Activated CD4-positive, alpha-beta memory T cell treated with anti-CD3 and anti-CD28 coated beads for 36 hours (primary cell): ENCODE measurements at regions of chr15 and their contacts with region 1.

Region 1: DNA sequence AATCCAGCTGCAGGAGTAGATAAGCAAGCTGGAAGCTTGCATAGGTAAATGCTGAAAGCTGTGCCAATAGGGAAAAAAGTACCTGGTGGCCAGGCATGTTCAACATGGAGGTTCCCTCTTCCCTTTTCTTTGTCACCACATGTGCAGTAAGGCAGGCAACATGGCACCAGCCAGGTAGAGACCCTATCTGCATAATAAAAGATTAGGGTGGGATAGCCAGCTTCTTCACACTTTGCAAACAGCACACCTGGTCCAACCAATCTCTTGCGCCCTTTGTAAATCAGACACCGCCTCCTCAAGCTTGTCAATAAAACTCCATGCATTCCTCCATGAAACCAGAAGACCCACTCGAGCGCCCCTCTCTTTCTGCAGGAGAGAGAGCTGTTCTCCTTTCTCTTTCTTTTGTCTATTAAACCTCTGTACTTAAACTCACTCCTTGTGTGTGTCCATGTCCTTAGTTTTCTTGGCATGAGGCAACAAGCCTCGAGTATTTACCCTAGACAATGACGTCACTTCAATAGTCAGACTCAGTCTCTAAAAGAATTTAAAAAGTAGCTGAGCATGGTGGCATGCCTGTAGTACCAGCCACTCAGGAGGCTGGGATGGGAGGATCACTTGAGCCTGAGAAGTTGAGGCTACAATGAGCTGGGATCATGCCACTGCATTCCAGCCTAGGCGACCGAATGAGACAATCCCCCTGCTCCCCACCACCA is 256.3 kb downstream of the SCAPER start:
- DNase-seq: no peak
- H3K4me3 Mint-ChIP-seq: no peak overlapping the region
- H3K27ac Mint-ChIP-seq: no peak overlapping the region
- H3K4me1 Mint-ChIP-seq: peaks cover 6% of the 10 kb centered on the region
- H3K27me3 Mint-ChIP-seq: no peaks in the 10 kb centered on the region

Region 2: GRCh38 chr15:76625267-76625666 is 23.6 kb before region 1 on chr15:
- CTCF ChIA-PET with region 1: no interaction called
- POLR2A ChIA-PET with region 1: no interaction called
- intact Hi-C with region 1: no loop called
- DNase-seq: no peak
- H3K4me3 Mint-ChIP-seq: no peak overlapping the region
- H3K27ac Mint-ChIP-seq: no peak overlapping the region
- H3K4me1 Mint-ChIP-seq: no peaks in the 10 kb centered on the region
- H3K27me3 Mint-ChIP-seq: no peaks in the 10 kb centered on the region

Region 3: DNA sequence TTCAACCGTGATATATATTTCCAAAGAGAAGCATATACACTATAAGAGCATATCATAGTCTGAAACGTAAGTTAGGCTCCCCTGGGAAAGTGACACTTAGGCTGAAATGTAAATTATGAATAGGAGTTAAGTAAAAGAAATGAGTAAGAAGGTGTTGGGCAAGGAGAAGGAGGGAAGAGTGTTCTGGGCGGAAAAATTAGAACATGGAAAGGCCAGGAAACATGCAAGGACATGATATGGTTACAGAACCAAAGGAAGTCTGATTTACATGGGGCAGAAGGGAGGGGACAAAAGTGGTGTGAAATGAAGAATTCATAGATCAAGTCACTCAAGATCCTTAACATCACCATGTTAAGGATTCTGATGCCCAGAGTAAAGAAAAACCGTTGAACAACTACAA is 181.1 kb after region 1 on chr15:
- CTCF ChIA-PET with region 1: no interaction called
- POLR2A ChIA-PET with region 1: no interaction called
- intact Hi-C with region 1: loop called (anchors 5 kb)
- DNase-seq: no peak
- H3K4me3 Mint-ChIP-seq: no peak overlapping the region
- H3K27ac Mint-ChIP-seq: no peak overlapping the region
- H3K4me1 Mint-ChIP-seq: peaks cover 9% of the 10 kb centered on the region
- H3K27me3 Mint-ChIP-seq: no peaks in the 10 kb centered on the region